T-cell (primary cell): ENCODE measurements at regions of chr15 and their contacts with region 1.

Region 1: GRCh38 chr15:64701482-64702184 is 73.8 kb downstream of the RBPMS2 start:
- DNase-seq: no peak
- ATAC-seq: no peak
- H3K4me3 ChIP-seq: peak overlapping the region in 1 of 2 donors; percentile 76
- H3K4me3 Mint-ChIP-seq: peak overlapping the region; percentile 70 to 91 (median 78)
- H3K27ac ChIP-seq: no peak overlapping the region
- H3K27ac Mint-ChIP-seq: peak overlapping the region; percentile 64 to 73
- H3K4me1 ChIP-seq: peaks cover 19 to 45% of the 10 kb centered on the region in 2 experiments
- H3K4me1 Mint-ChIP-seq: peaks cover 61 to 67% (median 65%) of the 10 kb centered on the region in 3 donors
- H3K27me3 ChIP-seq: no peaks in the 10 kb centered on the region
- H3K27me3 Mint-ChIP-seq: no peaks in the 10 kb centered on the region

Region 2: DNA sequence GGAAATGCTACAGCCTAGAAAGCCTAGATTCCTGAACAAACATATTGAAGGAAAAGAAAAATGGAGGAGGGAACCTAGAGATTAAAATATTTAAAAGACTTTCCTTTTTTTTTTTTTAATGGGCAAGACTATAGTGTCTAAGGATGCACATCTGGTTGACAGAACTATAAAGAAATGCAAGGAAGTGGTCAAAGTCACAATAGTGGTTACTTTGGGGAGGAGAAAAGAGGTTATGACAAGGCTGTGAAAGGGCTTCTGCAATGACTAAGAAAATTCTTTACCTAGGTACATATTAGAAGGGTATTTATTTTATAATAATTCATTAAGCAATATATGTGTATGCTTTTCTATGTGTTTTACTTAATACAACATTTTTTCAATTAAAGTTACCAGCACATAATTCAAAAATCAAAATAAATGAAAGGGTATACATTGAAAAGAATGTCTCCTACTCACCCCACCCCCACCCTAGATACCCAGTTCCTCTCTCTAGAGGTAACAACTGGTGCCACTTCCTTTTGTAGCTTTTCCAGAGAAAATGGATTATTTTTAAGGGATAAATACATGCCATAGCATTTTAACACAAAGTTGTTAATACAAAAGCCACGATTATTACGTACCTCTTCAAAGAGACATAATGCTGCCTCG is 938.0 kb before region 1 on chr15:
- CTCF ChIA-PET with region 1: no interaction called
- POLR2A ChIA-PET with region 1: interaction called in 1 of 2 experiments, 14 read pairs
- DNase-seq: peak in 1 of 35 experiments; percentile 36
- ATAC-seq: peak; percentile 52 to 89 (median 64)
- H3K4me3 ChIP-seq: no peak overlapping the region
- H3K4me3 Mint-ChIP-seq: peak overlapping the region in 1 of 3 donors; percentile 4
- H3K27ac ChIP-seq: no peak overlapping the region
- H3K27ac Mint-ChIP-seq: peak overlapping the region in 1 of 2 donors; percentile 68
- H3K4me1 ChIP-seq: peaks cover 17 to 20% of the 10 kb centered on the region in 2 experiments
- H3K4me1 Mint-ChIP-seq: peaks cover 60 to 67% (median 65%) of the 10 kb centered on the region in 3 donors
- H3K27me3 ChIP-seq: no peaks in the 10 kb centered on the region
- H3K27me3 Mint-ChIP-seq: no peaks in the 10 kb centered on the region